ENCODE measurements at regions of chr21 and their contacts with region 1.

Region 1: DNA sequence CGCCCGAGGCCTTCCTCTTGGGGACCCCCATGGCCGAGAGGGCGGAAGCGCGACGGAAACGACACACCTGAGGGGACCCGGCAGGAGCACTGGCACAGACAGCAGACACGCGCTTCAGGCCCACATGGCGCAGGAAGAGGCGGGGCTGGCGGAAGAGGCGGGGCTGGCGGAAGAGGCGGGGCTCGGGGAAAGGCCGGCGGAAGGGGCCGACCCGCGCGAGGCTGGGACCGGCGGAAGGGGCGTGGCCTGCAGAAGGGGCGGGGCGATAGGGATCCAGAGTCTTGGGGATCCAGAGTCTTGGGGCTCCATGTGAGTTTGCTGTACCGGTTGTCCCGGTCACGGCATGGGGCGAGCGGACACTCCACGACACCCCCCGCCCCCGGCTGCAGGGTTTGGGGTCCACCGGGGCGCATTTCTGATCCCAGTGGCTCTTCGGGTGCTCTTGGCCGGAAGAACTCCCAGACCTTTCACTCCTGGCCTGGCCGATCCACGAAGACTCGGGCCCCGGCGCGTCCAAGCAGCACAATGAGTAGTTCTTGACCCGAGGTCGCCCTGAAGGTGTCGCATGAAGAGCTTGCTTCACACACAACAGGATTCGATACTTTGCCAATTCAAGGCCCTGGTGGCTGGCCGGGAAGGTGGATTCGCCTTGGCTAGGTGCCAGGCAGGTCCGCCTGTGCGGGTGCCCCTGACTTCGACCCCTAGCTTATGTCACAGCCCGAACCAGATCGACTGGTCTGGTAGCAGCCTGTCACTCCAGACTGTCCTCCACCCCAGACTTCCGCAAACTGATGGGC is at the start of gene URB1:
- DNase-seq: peak; percentile 90 to 95 (median 92)
- H3K4me3 ChIP-seq: peak within 1 kb of the TSS; percentile 86 to 90
- H3K4me3 Mint-ChIP-seq: peak within 1 kb of the TSS; percentile 84 to 89 (median 88)
- H3K27ac ChIP-seq: peak within 1 kb of the TSS; percentile 68
- H3K27ac Mint-ChIP-seq: peak within 1 kb of the TSS; percentile 72 to 91 (median 84)
- H3K4me1 ChIP-seq: peaks cover 30% of the 10 kb centered on the region
- H3K4me1 Mint-ChIP-seq: peaks cover 23 to 54% (median 43%) of the 10 kb centered on the region in 4 donors
- H3K27me3 ChIP-seq: no peaks in the 10 kb centered on the region
- H3K27me3 Mint-ChIP-seq: peaks cover 2 to 4% of the 10 kb centered on the region in 2 donors
- total RNA-seq, gene URB1: 13.9 to 15.2 TPM

Region 2: DNA sequence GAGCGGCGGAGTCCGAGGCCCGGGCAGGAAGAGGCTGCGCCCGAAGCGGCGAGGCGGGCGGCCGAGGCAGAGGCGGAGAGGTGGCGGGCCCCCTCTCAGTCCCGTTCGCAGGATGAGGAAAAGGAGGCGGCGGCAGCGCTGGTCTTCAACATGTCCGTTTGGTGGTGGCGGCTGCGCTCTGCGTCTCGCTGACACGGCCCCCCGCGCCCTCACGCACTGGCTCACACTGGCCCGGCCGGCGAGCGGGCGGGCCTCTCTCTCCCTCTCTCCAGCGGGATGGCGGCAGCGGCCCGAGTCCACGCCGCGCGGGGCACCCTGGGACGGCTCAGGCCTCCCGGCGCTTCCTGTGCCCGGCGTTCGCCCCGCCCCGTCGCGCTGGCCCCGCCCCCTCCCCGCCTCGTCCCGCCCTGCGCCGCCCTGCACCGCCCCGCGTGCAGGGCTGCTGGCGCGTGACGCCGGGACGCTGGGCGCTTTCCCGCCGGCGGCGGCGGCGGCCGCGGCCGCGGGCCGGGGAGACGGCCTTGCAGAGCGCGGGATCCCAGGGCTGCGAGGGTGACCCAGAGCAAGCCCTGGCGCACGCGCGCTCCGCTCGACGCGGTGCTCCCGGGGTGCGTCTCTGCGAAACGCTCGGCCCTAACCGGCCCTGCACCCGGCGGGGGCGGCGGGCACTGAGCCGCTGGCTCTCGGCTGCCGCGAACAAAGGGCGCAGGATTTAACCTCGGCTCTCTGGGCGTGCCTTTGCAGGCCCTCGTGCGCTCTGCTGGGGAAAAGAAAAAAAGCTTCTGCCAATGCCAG is 661.1 kb before region 1 on chr21 and contains the start of gene SCAF4:
- CTCF ChIA-PET with region 1: no interaction called
- POLR2A ChIA-PET with region 1: no interaction called
- intact Hi-C with region 1: loop called (anchors 5 kb)
- DNase-seq: peak; percentile 73 to 80 (median 76)
- H3K4me3 ChIP-seq: peak within 1 kb of the TSS; percentile 67 to 89
- H3K4me3 Mint-ChIP-seq: peak within 1 kb of the TSS; percentile 24 to 94 (median 90)
- H3K27ac ChIP-seq: peak within 1 kb of the TSS; percentile 82
- H3K27ac Mint-ChIP-seq: peak within 1 kb of the TSS; percentile 54 to 94 (median 88)
- H3K4me1 ChIP-seq: peaks cover 50% of the 10 kb centered on the region
- H3K4me1 Mint-ChIP-seq: peaks cover 4 to 18% (median 9%) of the 10 kb centered on the region in 4 donors
- H3K27me3 ChIP-seq: no peaks in the 10 kb centered on the region
- H3K27me3 Mint-ChIP-seq: no peaks in the 10 kb centered on the region
- total RNA-seq, gene SCAF4: 60.2 to 64.7 TPM

Region 3: GRCh38 chr21:32214654-32215305 is 178.3 kb before region 1 on chr21:
- CTCF ChIA-PET with region 1: no interaction called
- POLR2A ChIA-PET with region 1: no interaction called
- intact Hi-C with region 1: no loop called
- DNase-seq: peak in 1 of 5 donors; percentile 29
- H3K4me3 ChIP-seq: no peak overlapping the region
- H3K4me3 Mint-ChIP-seq: no peak overlapping the region
- H3K27ac ChIP-seq: no peak overlapping the region
- H3K27ac Mint-ChIP-seq: no peak overlapping the region
- H3K4me1 ChIP-seq: no peaks in the 10 kb centered on the region
- H3K4me1 Mint-ChIP-seq: no peaks in the 10 kb centered on the region
- H3K27me3 ChIP-seq: no peaks in the 10 kb centered on the region
- H3K27me3 Mint-ChIP-seq: peaks cover 17 to 22% of the 10 kb centered on the region in 2 donors

Region 4: GRCh38 chr21:32403201-32403777 is 10.2 kb after region 1 on chr21:
- CTCF ChIA-PET with region 1: interaction called, 16 read pairs
- POLR2A ChIA-PET with region 1: interaction called, 3 read pairs
- intact Hi-C with region 1: no loop called
- DNase-seq: peak; percentile 63 to 68 (median 65)
- H3K4me3 ChIP-seq: no peak overlapping the region
- H3K4me3 Mint-ChIP-seq: no peak overlapping the region
- H3K27ac ChIP-seq: no peak overlapping the region
- H3K27ac Mint-ChIP-seq: peak overlapping the region in 2 of 7 donors; percentile 7 to 27
- H3K4me1 ChIP-seq: no peaks in the 10 kb centered on the region
- H3K4me1 Mint-ChIP-seq: peaks cover 4 to 21% (median 6%) of the 10 kb centered on the region in 4 donors
- H3K27me3 ChIP-seq: peaks cover 9% of the 10 kb centered on the region
- H3K27me3 Mint-ChIP-seq: peaks cover 1 to 7% of the 10 kb centered on the region in 2 donors

Region 5: GRCh38 chr21:32569261-32570230 is 176.5 kb after region 1 on chr21:
- CTCF ChIA-PET with region 1: interaction called, 14 read pairs
- POLR2A ChIA-PET with region 1: interaction called, 5 read pairs
- intact Hi-C with region 1: no loop called
- DNase-seq: peak; percentile 82 to 86 (median 85)
- H3K4me3 ChIP-seq: peak overlapping the region; percentile 76 to 96
- H3K4me3 Mint-ChIP-seq: peak overlapping the region; percentile 88 to 95 (median 94)
- H3K27ac ChIP-seq: peak overlapping the region; percentile 79
- H3K27ac Mint-ChIP-seq: peak overlapping the region; percentile 88 to 97 (median 93)
- H3K4me1 ChIP-seq: peaks cover 18% of the 10 kb centered on the region
- H3K4me1 Mint-ChIP-seq: peaks cover 5 to 26% (median 14%) of the 10 kb centered on the region in 4 donors
- H3K27me3 ChIP-seq: no peaks in the 10 kb centered on the region
- H3K27me3 Mint-ChIP-seq: peaks cover 0 to 1% of the 10 kb centered on the region in 2 donors

Region 6: GRCh38 chr21:32612075-32612998 is 219.3 kb after region 1 on chr21 and contains the start of gene CFAP298:
- CTCF ChIA-PET with region 1: interaction called, 3 read pairs
- POLR2A ChIA-PET with region 1: interaction called, 15 read pairs
- intact Hi-C with region 1: loop called (anchors 1 kb)
- DNase-seq: peak; percentile 90 to 97 (median 92)
- H3K4me3 ChIP-seq: peak within 1 kb of the TSS; percentile 95 to 99
- H3K4me3 Mint-ChIP-seq: peak within 1 kb of the TSS; percentile 91 to 98 (median 96)
- H3K27ac ChIP-seq: peak within 1 kb of the TSS; percentile 86
- H3K27ac Mint-ChIP-seq: peak within 1 kb of the TSS; percentile 98 to 99 (median 99)
- H3K4me1 ChIP-seq: peaks cover 12% of the 10 kb centered on the region
- H3K4me1 Mint-ChIP-seq: peaks cover 8 to 32% (median 20%) of the 10 kb centered on the region in 4 donors
- H3K27me3 ChIP-seq: no peaks in the 10 kb centered on the region
- H3K27me3 Mint-ChIP-seq: peaks cover 1 to 2% of the 10 kb centered on the region in 2 donors
- total RNA-seq, gene CFAP298: 29.4 to 39.1 TPM

Region 7: DNA sequence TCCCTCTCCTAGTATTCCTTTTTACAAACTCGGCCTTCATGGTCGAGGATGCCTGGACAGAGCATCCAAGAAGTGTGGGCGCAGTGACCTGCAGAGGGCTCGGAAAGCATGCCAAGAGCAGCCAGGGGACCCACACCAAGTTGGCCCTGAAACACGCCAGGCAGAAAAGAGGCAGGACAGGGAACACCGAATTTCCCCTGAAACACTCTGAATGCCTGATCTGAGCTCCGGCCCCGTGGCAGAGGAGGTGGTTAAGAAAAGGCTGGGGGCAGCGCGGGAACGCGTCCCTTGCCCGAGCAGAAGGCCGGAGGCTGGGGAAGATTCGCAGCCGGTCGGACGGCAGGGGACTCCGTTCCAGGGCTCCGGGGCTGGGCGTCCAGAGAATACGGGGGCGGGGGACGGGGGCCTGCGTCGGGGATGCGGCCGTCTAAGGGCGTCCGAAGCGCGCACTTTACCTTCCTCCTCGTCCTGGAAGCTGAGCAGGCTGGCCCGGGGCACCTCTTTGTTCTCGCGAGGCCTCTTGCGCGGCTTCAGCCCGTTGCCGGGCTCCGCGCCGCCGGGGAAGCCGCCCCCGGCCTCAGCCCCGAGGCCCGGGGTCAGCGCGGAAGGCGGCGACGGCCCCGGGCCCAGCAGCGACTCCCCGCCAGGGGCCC is 377.9 kb after region 1 on chr21:
- CTCF ChIA-PET with region 1: no interaction called
- POLR2A ChIA-PET with region 1: interaction called, 3 read pairs
- intact Hi-C with region 1: loop called (anchors 2 kb)
- DNase-seq: no peak
- H3K4me3 ChIP-seq: peak overlapping the region; percentile 77 to 85
- H3K4me3 Mint-ChIP-seq: peak overlapping the region; percentile 91 to 98 (median 96)
- H3K27ac ChIP-seq: peak overlapping the region; percentile 71
- H3K27ac Mint-ChIP-seq: peak overlapping the region; percentile 55 to 97 (median 94)
- H3K4me1 ChIP-seq: peaks cover 57% of the 10 kb centered on the region
- H3K4me1 Mint-ChIP-seq: peaks cover 39 to 70% (median 56%) of the 10 kb centered on the region in 4 donors
- H3K27me3 ChIP-seq: no peaks in the 10 kb centered on the region
- H3K27me3 Mint-ChIP-seq: peaks cover 0 to 3% of the 10 kb centered on the region in 2 donors